ENCODE measurements at regions of chr7 and their contacts with region 1.

Region 1: GRCh38 chr7:101244375-101245146 is at the start of gene FIS1:
- DNase-seq: peak; percentile 91
- H3K4me3 Mint-ChIP-seq: peak within 1 kb of the TSS; percentile 92
- H3K27ac Mint-ChIP-seq: peak within 1 kb of the TSS; percentile 94
- H3K4me1 Mint-ChIP-seq: peaks cover 18% of the 10 kb centered on the region
- H3K27me3 Mint-ChIP-seq: no peaks in the 10 kb centered on the region
- total RNA-seq, gene FIS1: 121 and 132 TPM in 2 replicates

Region 2: GRCh38 chr7:99472561-99473243 is 1771.9 kb before region 1 on chr7 and contains the start of gene ZNF789:
- intact Hi-C with region 1: loop called (anchors 5 kb)
- DNase-seq: peak; percentile 96
- H3K4me3 Mint-ChIP-seq: peak within 1 kb of the TSS; percentile 96
- H3K27ac Mint-ChIP-seq: peak within 1 kb of the TSS; percentile 91
- H3K4me1 Mint-ChIP-seq: peaks cover 20% of the 10 kb centered on the region
- H3K27me3 Mint-ChIP-seq: peaks cover 2% of the 10 kb centered on the region
- total RNA-seq, gene ZNF789: 23.2 and 24.3 TPM in 2 replicates

Region 3: DNA sequence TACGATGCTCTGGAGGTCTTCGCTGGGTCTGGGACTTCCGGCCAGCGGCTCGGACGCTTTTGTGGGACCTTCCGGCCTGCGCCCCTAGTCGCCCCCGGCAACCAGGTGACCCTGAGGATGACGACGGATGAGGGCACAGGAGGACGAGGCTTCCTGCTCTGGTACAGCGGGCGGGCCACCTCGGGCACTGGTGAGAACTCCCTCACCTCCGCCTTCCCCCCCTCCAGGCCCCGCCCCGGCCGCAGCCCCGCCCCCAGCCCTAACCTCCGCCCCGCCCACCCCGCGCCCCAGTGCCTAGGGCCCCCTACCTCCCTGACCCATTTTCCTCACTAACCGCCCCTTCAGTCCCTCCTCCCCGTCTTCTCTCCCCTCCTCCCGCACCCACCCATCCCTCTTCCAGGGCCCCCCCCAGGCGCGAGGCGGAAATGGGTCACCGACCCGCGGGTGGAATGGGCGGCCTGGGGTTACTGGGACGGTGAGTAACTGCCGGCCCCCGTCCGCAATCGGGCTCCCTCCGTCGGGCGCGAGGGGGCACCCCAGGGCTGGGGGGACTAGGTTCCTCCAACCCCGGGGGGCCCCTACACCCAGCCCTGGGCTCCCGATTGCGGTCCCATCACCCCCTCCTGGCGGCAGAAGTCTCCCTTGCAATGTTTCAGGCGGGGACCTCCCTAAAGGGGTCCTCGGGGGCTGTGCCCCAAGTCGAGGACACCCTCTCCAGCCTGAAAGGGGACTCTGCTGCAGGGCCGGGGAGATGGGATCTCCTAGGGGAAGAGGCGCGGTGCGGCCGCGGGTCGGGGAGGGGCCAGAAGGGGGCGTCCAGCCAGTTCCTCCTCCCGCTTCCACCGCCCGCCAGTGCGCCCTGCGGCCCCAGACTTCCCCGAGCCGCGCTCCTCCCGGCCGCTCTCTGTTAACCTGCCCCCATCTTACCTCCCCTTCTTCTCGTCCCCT is 640.3 kb before region 1 on chr7:
- intact Hi-C with region 1: loop called (anchors 10 kb)
- DNase-seq: peak; percentile 71
- H3K4me3 Mint-ChIP-seq: peak overlapping the region; percentile 79
- H3K27ac Mint-ChIP-seq: peak overlapping the region; percentile 84
- H3K4me1 Mint-ChIP-seq: peaks cover 6% of the 10 kb centered on the region
- H3K27me3 Mint-ChIP-seq: peaks cover 3% of the 10 kb centered on the region

Region 4: GRCh38 chr7:101138213-101138870 is 106.2 kb before region 1 on chr7:
- intact Hi-C with region 1: loop called (anchors 2 kb)
- DNase-seq: peak; percentile 67
- H3K4me3 Mint-ChIP-seq: peak overlapping the region; percentile 42
- H3K27ac Mint-ChIP-seq: peak overlapping the region; percentile 50
- H3K4me1 Mint-ChIP-seq: peaks cover 42% of the 10 kb centered on the region
- H3K27me3 Mint-ChIP-seq: peaks cover 22% of the 10 kb centered on the region

Region 5: GRCh38 chr7:101217388-101218235 is 26.9 kb before region 1 on chr7 and contains the starts of genes PLOD3 and ZNHIT1:
- intact Hi-C with region 1: loop called (anchors 1 kb)
- DNase-seq: peak; percentile 94
- H3K4me3 Mint-ChIP-seq: peak within 1 kb of the TSS; percentile 99
- H3K27ac Mint-ChIP-seq: peak within 1 kb of the TSS; percentile 84
- H3K4me1 Mint-ChIP-seq: peaks cover 22% of the 10 kb centered on the region
- H3K27me3 Mint-ChIP-seq: no peaks in the 10 kb centered on the region
- total RNA-seq, gene PLOD3: 75.5 and 82.8 TPM in 2 replicates
- total RNA-seq, gene ZNHIT1: 45.1 and 46.8 TPM in 2 replicates